AG04450 (cell line): ENCODE measurements at regions of chr20 and their contacts with region 1.

Region 1: GRCh38 chr20:47379433-47380150 is 23.1 kb upstream of the ZMYND8 start:
- DNase-seq: peak; percentile 63
- H3K4me3 ChIP-seq: no peak overlapping the region
- H3K27ac ChIP-seq: peak overlapping the region; percentile 52
- H3K27me3 ChIP-seq: no peaks in the 10 kb centered on the region
- CTCF ChIP-seq: no peak

Region 2: DNA sequence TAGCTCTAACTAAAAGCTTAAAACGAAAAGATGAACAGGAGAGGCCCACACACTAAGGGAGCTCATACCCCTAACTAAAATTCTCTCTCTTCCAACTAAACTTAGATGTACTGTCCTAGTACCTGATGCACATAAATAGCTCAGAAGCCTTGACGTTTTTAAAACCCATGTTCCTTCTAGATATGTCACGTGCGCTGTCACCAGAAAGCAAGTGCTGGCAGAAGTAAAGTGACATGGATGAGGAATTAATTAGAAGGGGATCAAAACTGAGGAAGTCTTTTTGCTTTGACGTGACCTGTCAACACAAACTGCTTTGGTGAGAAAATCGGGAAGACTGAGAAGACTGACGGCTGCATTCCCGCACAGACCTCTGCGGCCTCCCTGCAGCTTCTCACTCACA is 165.6 kb before region 1 on chr20:
- CTCF ChIA-PET with region 1: interaction called, 52 read pairs
- POLR2A ChIA-PET with region 1: interaction called, 4 read pairs
- DNase-seq: no peak
- H3K4me3 ChIP-seq: no peak overlapping the region
- H3K27ac ChIP-seq: no peak overlapping the region
- H3K27me3 ChIP-seq: no peaks in the 10 kb centered on the region
- CTCF ChIP-seq: no peak

Region 3: DNA sequence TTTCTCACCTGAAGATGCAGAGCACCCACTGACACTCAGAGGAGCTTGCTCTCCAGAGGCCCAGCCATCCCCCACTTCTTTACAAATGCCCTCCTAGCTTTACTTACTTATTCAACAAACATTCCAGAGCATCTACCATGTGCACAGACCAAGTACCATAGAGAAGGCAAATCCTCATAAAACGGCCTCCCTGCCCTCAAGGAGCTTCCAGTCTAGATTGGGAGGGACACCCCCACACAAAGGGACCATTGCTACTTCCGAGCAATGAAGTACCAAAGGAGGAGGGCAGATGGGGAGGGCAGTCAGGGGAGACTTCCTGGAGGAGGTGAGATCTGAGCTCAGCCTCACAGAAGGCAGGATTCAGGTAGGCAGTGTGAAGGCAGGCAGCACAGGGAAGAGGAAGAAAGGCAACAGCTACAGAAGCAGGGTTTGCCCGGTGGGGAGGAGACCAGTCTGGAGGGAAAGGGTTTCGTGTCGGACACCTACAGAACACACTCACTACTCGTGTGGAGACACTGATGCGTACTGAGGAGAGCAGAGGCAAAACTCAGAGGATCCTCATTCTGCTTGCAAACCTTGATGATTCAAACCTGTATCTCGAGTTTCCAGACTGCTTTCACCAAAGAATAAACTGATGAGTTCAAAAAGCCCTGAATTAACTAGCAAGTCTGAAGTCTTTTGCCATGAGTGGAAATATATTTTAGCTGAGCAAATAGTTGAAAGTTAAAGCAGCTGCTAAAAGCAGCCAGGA is 131.0 kb before region 1 on chr20:
- CTCF ChIA-PET with region 1: interaction called, 16 read pairs
- POLR2A ChIA-PET with region 1: interaction called, 3 read pairs
- DNase-seq: no peak
- H3K4me3 ChIP-seq: no peak overlapping the region
- H3K27ac ChIP-seq: no peak overlapping the region
- H3K27me3 ChIP-seq: no peaks in the 10 kb centered on the region
- CTCF ChIP-seq: no peak

Region 4: DNA sequence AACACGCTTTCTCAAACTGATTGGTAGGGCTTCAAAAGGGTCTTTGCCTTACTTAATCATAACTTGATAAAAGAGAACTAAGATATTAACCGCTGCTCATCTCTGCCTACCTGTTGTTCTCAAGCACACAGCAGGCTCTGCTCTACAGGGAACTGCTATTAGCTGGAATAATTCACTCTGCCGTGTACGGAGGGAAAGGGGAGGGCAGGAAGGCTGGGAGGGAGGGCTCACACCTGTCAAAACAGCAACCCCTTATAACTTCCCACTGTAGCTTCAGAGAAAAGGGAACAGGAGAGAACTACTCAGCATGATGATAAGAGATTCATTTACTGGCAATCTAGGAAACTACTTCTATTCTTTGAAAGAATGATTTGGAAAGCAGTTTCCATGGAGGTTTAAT is 98.2 kb before region 1 on chr20:
- CTCF ChIA-PET with region 1: interaction called, 561 read pairs
- POLR2A ChIA-PET with region 1: no interaction called
- DNase-seq: no peak
- H3K4me3 ChIP-seq: no peak overlapping the region
- H3K27ac ChIP-seq: no peak overlapping the region
- H3K27me3 ChIP-seq: no peaks in the 10 kb centered on the region
- CTCF ChIP-seq: no peak

Region 5: GRCh38 chr20:47309909-47310308 is 69.7 kb before region 1 on chr20:
- CTCF ChIA-PET with region 1: interaction called, 42 read pairs
- POLR2A ChIA-PET with region 1: no interaction called
- DNase-seq: no peak
- H3K4me3 ChIP-seq: no peak overlapping the region
- H3K27ac ChIP-seq: no peak overlapping the region
- H3K27me3 ChIP-seq: no peaks in the 10 kb centered on the region
- CTCF ChIP-seq: no peak

Region 6: GRCh38 chr20:47392015-47392720 is 12.6 kb after region 1 on chr20:
- CTCF ChIA-PET with region 1: interaction called, 29 read pairs
- POLR2A ChIA-PET with region 1: no interaction called
- DNase-seq: peak; percentile 82
- H3K4me3 ChIP-seq: no peak overlapping the region
- H3K27ac ChIP-seq: peak overlapping the region; percentile 97
- H3K27me3 ChIP-seq: no peaks in the 10 kb centered on the region
- CTCF ChIP-seq: no peak